ENCODE measurements at regions of chr17 and their contacts with region 1.

Region 1: DNA sequence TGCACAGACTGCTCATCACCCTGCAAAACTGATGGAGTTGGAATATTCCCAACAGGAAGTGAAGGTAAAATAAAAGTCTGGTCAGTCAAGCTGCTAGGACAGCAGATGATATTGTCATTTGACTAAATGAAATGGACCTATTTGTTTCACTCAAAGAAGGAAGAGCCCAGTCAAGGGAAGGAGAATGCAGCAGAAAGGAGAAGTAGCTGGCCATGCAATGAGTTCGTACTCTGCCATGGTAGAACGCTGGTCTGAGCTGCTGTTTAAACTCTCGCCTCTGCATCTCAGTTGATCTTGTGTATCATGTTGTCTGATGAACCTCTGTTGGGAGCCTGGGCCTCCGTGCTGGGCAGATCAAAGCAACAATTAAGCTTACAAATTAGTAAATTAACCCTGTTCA is 15.6 kb upstream of the YPEL2 start:
- DNase-seq: no peak
- ATAC-seq: no peak
- H3K4me3 ChIP-seq: no peak overlapping the region
- H3K27ac ChIP-seq: no peak overlapping the region
- H3K4me1 ChIP-seq: no peaks in the 10 kb centered on the region
- H3K27me3 ChIP-seq: no peaks in the 10 kb centered on the region
- CTCF ChIP-seq: no peak
- POLR2A ChIP-seq: no peak

Region 2: DNA sequence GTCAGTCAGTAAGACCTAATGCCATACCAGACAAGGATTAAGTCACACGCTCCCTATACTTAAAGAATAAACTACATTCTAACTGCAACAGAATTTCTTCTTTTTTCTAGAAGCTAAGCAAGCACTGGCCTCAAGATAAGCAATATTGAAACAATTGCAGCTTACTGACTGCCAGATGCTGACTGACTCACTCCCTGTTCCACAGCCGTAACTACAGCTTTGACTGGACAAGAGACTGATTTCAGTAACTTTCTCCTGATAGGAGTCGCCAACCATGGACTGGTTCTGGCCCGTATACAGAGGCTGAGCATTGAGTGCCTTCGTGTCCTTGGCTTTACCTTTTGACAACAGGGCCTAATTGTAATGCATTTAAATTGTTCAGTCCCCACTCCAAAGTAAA is 277.1 kb before region 1 on chr17:
- intact Hi-C with region 1: no loop called
- DNase-seq: peak in 3 of 4 donors; percentile 5 to 33 (median 15)
- ATAC-seq: no peak
- H3K4me3 ChIP-seq: no peak overlapping the region
- H3K27ac ChIP-seq: no peak overlapping the region
- H3K4me1 ChIP-seq: peaks cover 12% of the 10 kb centered on the region
- H3K27me3 ChIP-seq: no peaks in the 10 kb centered on the region
- CTCF ChIP-seq: no peak
- POLR2A ChIP-seq: no peak

Region 3: GRCh38 chr17:59110973-59111938 is 204.6 kb before region 1 on chr17:
- intact Hi-C with region 1: no loop called
- DNase-seq: no peak
- ATAC-seq: no peak
- H3K4me3 ChIP-seq: no peak overlapping the region
- H3K27ac ChIP-seq: no peak overlapping the region
- H3K4me1 ChIP-seq: peaks cover 11% of the 10 kb centered on the region
- H3K27me3 ChIP-seq: no peaks in the 10 kb centered on the region
- CTCF ChIP-seq: no peak
- POLR2A ChIP-seq: no peak

Region 4: DNA sequence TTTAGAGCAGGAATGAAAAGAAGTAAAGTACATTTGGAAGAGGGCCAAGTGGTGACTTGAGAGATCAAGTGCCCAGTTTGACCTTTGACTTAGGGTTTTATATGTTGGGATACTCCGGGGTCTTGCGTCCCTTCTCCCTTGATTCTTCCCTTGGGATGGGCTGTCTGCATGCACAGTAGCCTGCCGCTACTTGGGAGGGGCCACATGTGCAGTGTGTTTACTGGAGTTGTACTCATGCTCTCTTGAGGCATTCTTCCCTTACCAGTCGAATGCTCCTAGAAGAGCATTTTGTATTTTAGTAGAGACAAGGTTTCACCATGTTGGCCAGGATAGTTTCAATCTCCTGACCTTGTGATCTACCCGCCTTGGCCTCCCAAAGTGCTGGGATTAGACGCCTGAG is 71.8 kb before region 1 on chr17:
- intact Hi-C with region 1: no loop called
- DNase-seq: no peak
- ATAC-seq: no peak
- H3K4me3 ChIP-seq: no peak overlapping the region
- H3K27ac ChIP-seq: no peak overlapping the region
- H3K4me1 ChIP-seq: no peaks in the 10 kb centered on the region
- H3K27me3 ChIP-seq: no peaks in the 10 kb centered on the region
- CTCF ChIP-seq: no peak
- POLR2A ChIP-seq: no peak

Region 5: GRCh38 chr17:59440784-59441441 is 125.0 kb after region 1 on chr17:
- intact Hi-C with region 1: loop called (anchors 5 kb)
- DNase-seq: peak; percentile 92 to 96 (median 94)
- ATAC-seq: peak; percentile 94
- H3K4me3 ChIP-seq: no peak overlapping the region
- H3K27ac ChIP-seq: peak overlapping the region in 3 of 4 donors; percentile 1 to 60 (median 59)
- H3K4me1 ChIP-seq: peaks cover 17% of the 10 kb centered on the region
- H3K27me3 ChIP-seq: no peaks in the 10 kb centered on the region
- CTCF ChIP-seq: peak; percentile 59 to 93 (median 90)
- POLR2A ChIP-seq: no peak

Region 6: DNA sequence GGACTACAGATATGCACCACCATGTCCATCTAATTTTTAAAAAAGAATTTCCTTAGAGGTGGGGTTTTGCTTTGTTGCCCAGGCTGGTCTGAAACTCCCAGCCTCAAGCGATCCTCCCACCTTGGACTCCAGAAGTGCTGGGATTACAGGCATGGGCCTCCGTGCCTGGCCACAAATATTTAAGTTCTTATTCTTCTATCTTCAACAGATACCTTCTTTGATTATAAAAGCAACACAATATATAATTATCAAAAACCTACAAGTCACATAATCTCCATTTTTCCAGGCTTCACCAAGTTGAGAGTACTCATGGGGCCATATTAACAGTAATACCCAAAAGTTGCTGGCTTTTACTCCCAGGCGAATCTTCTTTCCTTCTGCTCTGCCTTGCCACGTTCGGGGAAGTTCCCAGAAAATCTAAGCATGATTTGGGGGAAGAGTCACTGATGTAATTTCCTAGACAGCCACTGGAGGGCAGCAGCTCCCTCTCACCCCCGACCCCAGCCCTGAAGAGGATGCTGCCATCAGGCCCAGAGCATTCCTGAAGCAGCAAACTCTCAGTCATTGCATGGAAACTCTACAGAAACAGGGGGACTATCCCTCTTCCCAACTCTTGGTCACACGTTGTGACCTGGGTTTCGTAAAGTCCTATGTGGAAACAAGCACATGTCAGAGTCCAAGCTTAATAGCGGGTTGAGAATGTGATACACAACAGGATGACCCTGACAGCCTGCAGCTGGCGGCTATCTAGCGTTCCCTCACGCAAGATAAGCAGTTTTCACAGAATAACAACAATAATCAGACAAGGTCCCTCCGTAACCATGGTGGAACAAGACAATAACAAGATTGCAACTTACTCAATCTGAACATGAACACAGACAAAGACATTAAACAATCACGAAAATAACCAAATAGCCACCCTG is 205.6 kb after region 1 on chr17:
- intact Hi-C with region 1: no loop called
- DNase-seq: peak; percentile 44 to 61 (median 54)
- ATAC-seq: peak; percentile 76
- H3K4me3 ChIP-seq: no peak overlapping the region
- H3K27ac ChIP-seq: no peak overlapping the region
- H3K4me1 ChIP-seq: peaks cover 6% of the 10 kb centered on the region
- H3K27me3 ChIP-seq: no peaks in the 10 kb centered on the region
- CTCF ChIP-seq: peak; percentile 71 to 84 (median 77)
- POLR2A ChIP-seq: no peak